HepG2 (cell line): ENCODE measurements at regions of chr3 and their contacts with region 1.

Region 1: DNA sequence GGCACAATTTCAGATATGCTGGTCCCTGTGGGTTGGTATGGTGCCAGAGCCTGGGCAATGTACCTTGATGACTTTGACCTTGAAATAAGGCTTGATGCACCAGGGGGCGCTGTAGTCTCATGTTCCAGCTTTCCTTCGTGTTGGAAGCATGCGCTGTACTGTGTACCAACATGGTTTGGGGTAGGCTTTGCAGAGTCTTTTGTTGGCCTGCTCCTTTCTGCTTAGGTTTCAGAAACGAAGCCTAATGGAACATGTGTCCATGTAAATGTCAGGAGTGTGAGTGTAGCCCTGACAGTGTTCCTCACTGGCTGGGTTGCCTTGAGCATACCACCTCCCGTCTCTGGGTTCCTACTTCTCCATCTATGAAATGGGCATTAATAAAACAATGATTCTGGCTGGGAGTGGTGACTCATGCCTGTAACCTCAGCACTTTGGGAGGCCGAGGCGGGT is 3.6 kb upstream of the CCR4 start:
- DNase-seq: peak; percentile 83
- ATAC-seq: peak; percentile 92
- H3K4me3 ChIP-seq: no peak overlapping the region
- H3K27ac ChIP-seq: no peak overlapping the region
- H3K4me1 ChIP-seq: peaks cover 14% of the 10 kb centered on the region; the same call in 1 of the 2 replicates
- H3K27me3 ChIP-seq: no peaks in the 10 kb centered on the region
- CTCF ChIP-seq: peak; percentile 97
- EP300 ChIP-seq: no peak
- POLR2A ChIP-seq: no peak
- RAD21 ChIP-seq: peak; percentile 94

Region 2: DNA sequence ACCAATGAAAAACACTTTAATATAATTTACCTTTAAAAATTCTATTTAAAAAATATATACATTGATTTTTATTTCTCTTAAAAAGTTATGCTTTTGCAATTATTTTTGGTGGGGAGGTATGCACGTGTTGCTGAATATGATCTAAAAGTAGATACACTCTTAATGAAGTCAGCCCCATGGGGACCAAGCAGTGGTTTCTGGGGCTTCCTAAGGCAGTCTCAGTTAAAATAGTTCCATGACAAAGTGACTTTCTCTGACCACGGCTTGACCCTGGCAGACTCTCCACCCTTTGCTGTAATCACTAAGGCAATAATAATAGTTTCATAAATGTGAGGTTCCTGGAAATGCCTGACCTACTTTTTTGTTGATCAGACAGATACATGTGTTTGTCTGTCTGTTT is 54.1 kb after region 1 on chr3:
- CTCF ChIA-PET with region 1: no interaction called
- POLR2A ChIA-PET with region 1: no interaction called
- in situ Hi-C with region 1: no loop called
- intact Hi-C with region 1: loop called (anchors 10 kb)
- DNase-seq: no peak
- ATAC-seq: no peak
- H3K4me3 ChIP-seq: no peak overlapping the region
- H3K27ac ChIP-seq: no peak overlapping the region
- H3K4me1 ChIP-seq: peaks cover 22% of the 10 kb centered on the region
- H3K27me3 ChIP-seq: no peaks in the 10 kb centered on the region
- CTCF ChIP-seq: no peak
- EP300 ChIP-seq: no peak
- POLR2A ChIP-seq: no peak
- RAD21 ChIP-seq: no peak

Region 3: DNA sequence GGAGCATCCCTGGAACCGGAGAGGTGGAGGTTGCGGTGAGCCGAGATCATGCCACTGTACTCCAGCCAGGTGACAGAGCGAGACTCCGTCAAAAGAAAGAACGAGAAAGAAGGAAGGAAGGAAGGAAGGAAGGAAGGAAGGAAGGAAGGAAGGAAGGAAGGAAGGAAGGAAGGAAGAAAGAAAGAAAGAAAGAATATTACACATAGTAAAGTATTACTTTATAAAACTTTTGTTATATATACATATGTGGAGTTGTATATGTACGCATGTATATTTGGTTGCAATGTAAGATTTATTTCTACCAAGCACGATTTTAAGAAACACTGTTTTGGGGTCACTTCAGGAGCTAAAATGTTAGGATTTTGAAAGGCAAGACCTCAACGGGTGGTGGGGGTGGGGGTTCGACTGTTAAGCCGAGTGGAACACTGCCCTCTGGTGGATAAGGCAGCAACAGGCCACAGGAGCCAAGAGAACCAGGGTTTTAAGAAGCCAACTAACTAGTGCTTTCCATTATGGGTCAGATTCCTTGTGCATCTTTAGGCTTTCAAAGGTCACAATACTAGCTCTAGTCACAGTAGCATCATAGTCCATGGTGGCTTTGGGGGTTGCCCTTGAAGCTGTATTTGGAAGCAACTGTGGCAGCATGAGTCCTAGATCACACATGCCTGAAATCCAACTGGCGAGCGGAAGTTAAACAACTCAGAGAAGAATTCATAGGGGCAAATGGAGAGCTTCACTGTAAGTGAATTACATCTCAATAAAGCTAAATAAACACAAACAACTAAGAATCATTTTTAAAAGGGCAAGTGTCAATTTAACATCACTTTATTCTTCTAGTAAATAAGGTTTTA is 126.6 kb after region 1 on chr3:
- CTCF ChIA-PET with region 1: interaction called, 38 read pairs
- POLR2A ChIA-PET with region 1: no interaction called
- in situ Hi-C with region 1: no loop called
- intact Hi-C with region 1: loop called (anchors 1 kb)
- DNase-seq: peak; percentile 58
- ATAC-seq: peak; percentile 90
- H3K4me3 ChIP-seq: no peak overlapping the region
- H3K27ac ChIP-seq: no peak overlapping the region
- H3K4me1 ChIP-seq: peaks cover 12% of the 10 kb centered on the region
- H3K27me3 ChIP-seq: no peaks in the 10 kb centered on the region
- CTCF ChIP-seq: peak; percentile 92
- EP300 ChIP-seq: no peak
- POLR2A ChIP-seq: no peak
- RAD21 ChIP-seq: peak; percentile 86

Region 4: DNA sequence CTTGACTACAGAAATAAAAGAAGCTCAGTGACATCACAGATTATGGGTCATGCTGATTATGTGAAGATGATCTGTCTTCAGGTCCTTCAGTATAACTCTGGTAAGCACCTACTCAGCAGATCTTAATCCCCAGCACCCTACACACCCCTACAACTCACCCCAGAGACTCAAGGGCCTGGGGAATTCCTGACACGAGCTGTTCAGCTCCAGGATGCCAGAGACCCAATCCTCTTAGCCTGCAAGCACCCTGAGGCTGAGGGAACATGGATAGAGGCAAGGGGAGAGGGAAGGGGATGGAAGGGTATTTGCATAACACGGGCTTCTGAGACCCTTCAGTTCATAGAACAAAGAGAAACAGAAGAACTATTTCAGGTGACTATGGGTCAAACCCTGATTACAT is 136.1 kb after region 1 on chr3:
- CTCF ChIA-PET with region 1: no interaction called
- POLR2A ChIA-PET with region 1: no interaction called
- in situ Hi-C with region 1: loop called (anchors 5 kb)
- intact Hi-C with region 1: no loop called
- DNase-seq: no peak
- ATAC-seq: no peak
- H3K4me3 ChIP-seq: no peak overlapping the region
- H3K27ac ChIP-seq: no peak overlapping the region
- H3K4me1 ChIP-seq: peaks cover 50% of the 10 kb centered on the region
- H3K27me3 ChIP-seq: no peaks in the 10 kb centered on the region
- CTCF ChIP-seq: no peak
- EP300 ChIP-seq: no peak
- POLR2A ChIP-seq: no peak
- RAD21 ChIP-seq: no peak

Region 5: GRCh38 chr3:33372218-33373081 is 424.6 kb after region 1 on chr3:
- CTCF ChIA-PET with region 1: no interaction called
- POLR2A ChIA-PET with region 1: no interaction called
- in situ Hi-C with region 1: loop called (anchors 25 kb)
- intact Hi-C with region 1: loop called (anchors 5 kb)
- DNase-seq: no peak
- ATAC-seq: peak; percentile 58
- H3K4me3 ChIP-seq: no peak overlapping the region
- H3K27ac ChIP-seq: no peak overlapping the region
- H3K4me1 ChIP-seq: peaks cover 4% of the 10 kb centered on the region
- H3K27me3 ChIP-seq: no peaks in the 10 kb centered on the region
- CTCF ChIP-seq: peak; percentile 85
- EP300 ChIP-seq: no peak
- POLR2A ChIP-seq: no peak
- RAD21 ChIP-seq: peak; percentile 79